ENCODE measurements at regions of chr11 and their contacts with region 1.

Region 1: GRCh38 chr11:43819926-43820325 is 60.7 kb upstream of the ALKBH3 start:
- DNase-seq: peak; percentile 78
- H3K4me3 ChIP-seq: no peak overlapping the region
- H3K27ac ChIP-seq: no peak overlapping the region
- H3K4me1 ChIP-seq: peaks cover 11% of the 10 kb centered on the region
- H3K27me3 ChIP-seq: no peaks in the 10 kb centered on the region
- CTCF ChIP-seq: no peak

Region 2: DNA sequence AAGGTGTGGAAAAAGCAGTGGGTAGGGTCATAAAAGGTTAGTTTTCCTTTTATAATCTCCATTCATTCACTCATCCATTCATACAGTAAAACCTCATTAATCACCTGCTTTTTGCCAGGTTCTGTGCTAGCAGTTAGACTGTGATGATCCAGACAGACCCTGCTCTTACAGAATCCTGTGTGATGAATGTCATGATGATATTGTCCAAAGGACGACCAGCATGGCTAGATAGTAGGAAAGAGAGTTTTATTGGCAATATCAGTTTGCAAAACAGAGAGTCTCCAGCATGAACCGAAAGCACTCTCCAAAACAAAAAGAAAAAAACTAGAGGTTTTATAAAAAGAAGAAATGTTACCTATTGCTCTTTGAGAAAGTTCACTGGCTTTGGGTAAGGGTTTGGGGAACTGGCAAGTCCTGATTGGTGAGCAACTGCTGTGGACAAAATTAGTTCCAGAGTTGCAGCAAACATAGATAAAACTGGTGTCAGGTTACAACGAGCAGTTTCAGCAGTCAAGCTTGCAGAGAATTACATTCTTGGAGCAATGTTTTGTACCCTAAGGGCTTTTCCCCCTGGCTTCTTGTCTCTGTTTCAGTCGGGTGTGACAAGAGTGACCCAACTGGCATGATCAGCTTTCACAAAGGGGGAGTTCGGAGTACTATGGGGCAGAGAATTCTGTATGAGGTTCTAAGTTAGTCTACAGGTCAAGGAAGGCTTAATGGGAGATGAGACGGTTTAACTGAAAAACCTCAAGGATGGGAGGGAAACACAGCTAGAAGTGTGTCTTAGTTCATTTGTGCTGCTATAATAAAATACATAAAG is 81.1 kb before region 1 on chr11:
- CTCF ChIA-PET with region 1: no interaction called
- dilution Hi-C with region 1: no loop called
- in situ Hi-C with region 1: no loop called
- intact Hi-C with region 1: no loop called
- DNase-seq: peak; percentile 60
- H3K4me3 ChIP-seq: no peak overlapping the region
- H3K27ac ChIP-seq: no peak overlapping the region
- H3K4me1 ChIP-seq: peaks cover 38% of the 10 kb centered on the region
- H3K27me3 ChIP-seq: no peaks in the 10 kb centered on the region
- CTCF ChIP-seq: no peak

Region 3: GRCh38 chr11:43789700-43790443 is 30.1 kb before region 1 on chr11:
- CTCF ChIA-PET with region 1: no interaction called
- dilution Hi-C with region 1: no loop called
- in situ Hi-C with region 1: no loop called
- intact Hi-C with region 1: loop called (anchors 2 kb)
- DNase-seq: peak; percentile 74
- H3K4me3 ChIP-seq: no peak overlapping the region
- H3K27ac ChIP-seq: peak overlapping the region; percentile 86
- H3K4me1 ChIP-seq: peaks cover 19% of the 10 kb centered on the region
- H3K27me3 ChIP-seq: no peaks in the 10 kb centered on the region
- CTCF ChIP-seq: no peak

Region 4: DNA sequence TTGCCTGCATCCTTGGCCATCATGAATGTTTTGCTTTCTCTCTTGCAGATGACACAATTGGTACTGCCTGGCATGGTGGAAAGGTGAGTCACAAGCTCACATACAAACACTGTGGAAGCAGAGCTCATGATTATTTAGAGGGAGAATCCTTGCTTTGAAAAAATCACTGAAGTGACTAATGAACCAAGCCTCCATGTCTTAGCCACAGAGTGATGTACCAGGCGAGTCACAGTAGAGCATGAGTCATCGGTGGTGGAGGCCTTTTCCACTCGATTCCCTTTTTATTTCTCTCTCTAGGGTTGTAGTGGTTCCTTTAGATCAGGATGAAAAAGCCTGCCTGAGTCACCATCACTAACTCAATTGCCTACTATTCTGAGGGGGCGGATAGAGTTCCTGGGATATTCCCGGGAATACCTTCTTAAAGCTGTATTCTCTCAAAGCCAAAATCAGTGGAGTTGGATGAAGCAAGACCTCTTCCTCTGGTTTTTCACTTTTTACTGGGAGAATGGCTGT is 11.1 kb after region 1 on chr11:
- CTCF ChIA-PET with region 1: no interaction called
- dilution Hi-C with region 1: no loop called
- in situ Hi-C with region 1: no loop called
- intact Hi-C with region 1: loop called (anchors 1 kb)
- DNase-seq: peak; percentile 100
- H3K4me3 ChIP-seq: peak overlapping the region in 1 of 3 experiments; percentile 14
- H3K27ac ChIP-seq: peak overlapping the region; percentile 46
- H3K4me1 ChIP-seq: peaks cover 31% of the 10 kb centered on the region
- H3K27me3 ChIP-seq: no peaks in the 10 kb centered on the region
- CTCF ChIP-seq: no peak

Region 5: GRCh38 chr11:43895601-43896000 is 75.7 kb after region 1 on chr11:
- CTCF ChIA-PET with region 1: no interaction called
- dilution Hi-C with region 1: no loop called
- in situ Hi-C with region 1: no loop called
- intact Hi-C with region 1: no loop called
- DNase-seq: no peak
- H3K4me3 ChIP-seq: no peak overlapping the region
- H3K27ac ChIP-seq: no peak overlapping the region
- H3K4me1 ChIP-seq: no peaks in the 10 kb centered on the region
- H3K27me3 ChIP-seq: no peaks in the 10 kb centered on the region
- CTCF ChIP-seq: no peak

Measured in mammary epithelial cell (primary cell).